ENCODE measurements at regions of chr3 and their contacts with region 1.

Region 1: DNA sequence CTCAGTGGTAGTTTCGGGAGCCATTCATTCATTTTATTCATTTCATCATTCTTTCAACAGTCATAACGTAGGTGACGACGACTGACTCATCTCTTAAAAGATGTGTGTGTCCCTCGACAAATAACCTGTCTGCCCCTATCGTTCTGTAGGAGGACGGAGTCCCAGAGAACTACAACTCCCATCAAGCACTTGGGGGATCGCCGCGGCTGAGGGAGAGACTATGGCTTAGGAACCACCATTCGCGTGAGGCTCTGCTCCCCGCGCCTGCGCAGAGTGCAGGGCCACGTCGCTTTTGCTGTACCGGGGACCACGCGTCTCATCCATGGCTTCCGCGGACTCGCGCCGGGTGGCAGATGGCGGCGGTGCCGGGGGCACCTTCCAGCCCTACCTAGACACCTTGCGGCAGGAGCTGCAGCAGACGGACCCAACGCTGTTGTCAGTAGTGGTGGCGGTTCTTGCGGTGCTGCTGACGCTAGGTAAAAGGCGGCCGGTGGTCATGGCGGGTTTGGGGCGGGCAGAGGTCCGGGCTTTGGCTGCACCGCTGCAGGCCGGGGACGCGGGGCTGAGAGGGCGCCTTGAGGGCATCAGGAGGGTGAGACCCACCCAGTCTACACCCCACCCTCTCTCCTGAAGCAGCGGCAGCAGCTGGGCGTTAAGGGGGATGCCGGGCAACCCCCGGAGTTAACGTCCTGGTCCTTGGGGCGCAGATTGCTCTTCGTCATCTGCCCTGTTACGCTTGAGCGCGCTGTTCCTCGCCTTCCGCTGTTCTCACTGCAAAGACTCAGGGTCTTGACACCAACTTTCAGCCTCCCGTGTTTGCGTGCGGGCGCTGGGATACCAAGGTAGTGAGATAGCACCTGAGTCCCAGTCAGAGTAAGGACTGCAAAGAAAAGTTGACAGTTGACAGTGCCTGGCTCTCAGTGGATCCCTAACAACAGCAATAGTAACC is at the start of gene SRPRB:
- DNase-seq: peak; percentile 95
- H3K4me3 ChIP-seq: peak within 1 kb of the TSS; percentile 71 to 95 (median 82)
- H3K27ac ChIP-seq: peak within 1 kb of the TSS; percentile 35
- H3K4me1 ChIP-seq: peaks cover 6% of the 10 kb centered on the region
- H3K27me3 ChIP-seq: peaks cover 3 to 7% of the 10 kb centered on the region in 2 experiments
- CTCF ChIP-seq: no peak
- POLR2A ChIP-seq: no peak
- total RNA-seq, gene SRPRB: 59.5 and 69.2 TPM in 2 replicates

Region 2: GRCh38 chr3:133457465-133458067 is 348.2 kb before region 1 on chr3:
- CTCF ChIA-PET with region 1: no interaction called
- POLR2A ChIA-PET with region 1: no interaction called
- dilution Hi-C with region 1: no loop called
- intact Hi-C with region 1: loop called (anchors 10 kb)
- DNase-seq: no peak
- H3K4me3 ChIP-seq: no peak overlapping the region
- H3K27ac ChIP-seq: no peak overlapping the region
- H3K4me1 ChIP-seq: no peaks in the 10 kb centered on the region
- H3K27me3 ChIP-seq: peaks cover 9 to 12% of the 10 kb centered on the region in 2 experiments
- CTCF ChIP-seq: no peak
- POLR2A ChIP-seq: no peak

Region 3: DNA sequence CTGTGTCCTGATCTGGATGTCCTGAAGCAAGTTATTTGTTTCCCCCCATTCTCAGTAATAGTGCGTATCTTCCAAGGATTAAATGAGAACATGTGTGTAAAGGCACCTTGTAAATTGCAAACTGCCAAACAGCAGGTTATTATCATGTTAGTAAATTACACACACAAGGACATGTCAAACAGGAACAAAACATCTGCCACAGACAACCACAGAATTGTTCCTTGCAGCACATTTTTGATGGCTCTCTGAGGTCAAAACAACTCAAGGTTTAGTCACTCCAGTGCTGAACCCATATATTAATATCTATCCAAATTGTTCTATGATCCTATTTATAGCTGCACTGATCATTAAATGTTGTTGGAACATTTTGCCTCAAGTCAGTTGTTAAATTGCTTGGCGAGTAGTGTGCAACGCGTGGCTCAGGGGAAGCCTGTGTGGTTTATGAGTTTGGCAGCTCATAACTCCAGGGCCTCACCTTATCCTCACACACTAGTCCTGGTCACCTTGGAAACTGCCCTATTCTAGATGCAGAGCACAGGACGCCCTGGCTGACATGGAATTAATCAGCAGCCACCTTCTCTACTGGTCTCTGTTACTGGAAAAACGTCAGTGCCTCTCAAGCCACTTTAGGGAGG is 278.6 kb before region 1 on chr3:
- CTCF ChIA-PET with region 1: no interaction called
- POLR2A ChIA-PET with region 1: no interaction called
- dilution Hi-C with region 1: no loop called
- intact Hi-C with region 1: no loop called
- DNase-seq: no peak
- H3K4me3 ChIP-seq: no peak overlapping the region
- H3K27ac ChIP-seq: no peak overlapping the region
- H3K4me1 ChIP-seq: peaks cover 6% of the 10 kb centered on the region
- H3K27me3 ChIP-seq: no peaks in the 10 kb centered on the region
- CTCF ChIP-seq: no peak
- POLR2A ChIP-seq: no peak

Region 4: DNA sequence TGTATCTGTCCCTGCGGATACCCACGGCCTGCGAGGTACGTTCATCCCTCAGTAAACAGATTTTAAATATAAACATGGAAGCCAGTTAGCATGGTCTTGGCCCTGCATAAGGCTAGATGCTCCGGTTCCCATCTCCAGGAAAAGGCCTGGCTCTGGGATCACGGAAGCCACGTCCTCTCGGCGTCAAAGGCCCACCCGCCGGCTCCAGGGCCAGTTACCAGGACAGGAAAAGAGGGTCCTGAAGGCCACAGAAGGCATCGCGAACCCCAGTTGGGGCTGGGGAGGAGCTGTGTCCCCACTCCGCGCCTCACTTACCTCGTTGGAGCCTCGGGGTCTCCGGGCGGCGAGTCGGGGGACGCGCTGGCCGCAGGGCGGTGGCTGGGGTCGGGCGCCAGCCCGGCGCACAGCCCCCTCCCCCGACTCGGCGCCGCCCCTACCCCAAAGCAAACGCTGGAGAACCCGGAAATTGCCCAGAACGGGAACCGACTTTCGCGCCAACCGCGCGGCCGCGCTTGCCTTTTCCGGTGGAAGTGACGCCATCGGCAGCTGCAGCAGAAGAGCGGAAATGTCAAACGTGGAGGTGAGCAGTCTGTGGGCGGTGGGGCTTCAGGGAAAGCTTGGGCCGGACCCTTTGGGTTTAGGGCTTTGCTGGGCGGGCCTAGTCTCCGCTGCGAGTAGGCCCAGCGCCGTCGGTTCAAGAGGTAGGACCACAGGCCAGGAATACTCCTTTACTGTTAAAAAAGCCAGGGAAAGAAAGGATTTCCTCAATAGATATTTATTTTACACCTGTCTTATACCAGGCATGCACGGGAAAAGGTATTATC is 144.1 kb before region 1 on chr3 and contains the start of gene TOPBP1:
- CTCF ChIA-PET with region 1: no interaction called
- POLR2A ChIA-PET with region 1: no interaction called
- dilution Hi-C with region 1: no loop called
- intact Hi-C with region 1: loop called (anchors 1 kb)
- DNase-seq: peak; percentile 69
- H3K4me3 ChIP-seq: peak within 1 kb of the TSS; percentile 60 to 86 (median 62)
- H3K27ac ChIP-seq: peak within 1 kb of the TSS; percentile 90
- H3K4me1 ChIP-seq: peaks cover 22% of the 10 kb centered on the region
- H3K27me3 ChIP-seq: no peaks in the 10 kb centered on the region
- CTCF ChIP-seq: no peak
- POLR2A ChIP-seq: peak; percentile 73
- total RNA-seq, gene TOPBP1: 42.2 and 42.4 TPM in 2 replicates

Region 5: GRCh38 chr3:134078169-134078821 is 272.5 kb after region 1 on chr3:
- CTCF ChIA-PET with region 1: no interaction called
- POLR2A ChIA-PET with region 1: no interaction called
- dilution Hi-C with region 1: no loop called
- intact Hi-C with region 1: no loop called
- DNase-seq: no peak
- H3K4me3 ChIP-seq: no peak overlapping the region
- H3K27ac ChIP-seq: no peak overlapping the region
- H3K4me1 ChIP-seq: no peaks in the 10 kb centered on the region
- H3K27me3 ChIP-seq: no peaks in the 10 kb centered on the region
- CTCF ChIP-seq: no peak
- POLR2A ChIP-seq: no peak

Measured in endothelial cell of umbilical vein (primary cell).